Activated T-helper 1 cell treated with anti-CD3 and anti-CD28 coated beads, Interleukin-12 subunit alpha, Interleukin-12 subunit beta, Interleukin-2, Interleukin-4 antibody, amounts not matched to agents 30 ng/mL and 10 ng/mL and 1 ng/mL, durations not matched to agents 14 hours and 24 hours and 36 hours (primary cell): ENCODE measurements at regions of chr13 and their contacts with region 1.

Region 1: GRCh38 chr13:45417790-45418534 is at the start of gene SLC25A30:
- DNase-seq: peak; percentile 85
- H3K4me3 Mint-ChIP-seq: peak within 1 kb of the TSS; percentile 94
- H3K27ac Mint-ChIP-seq: peak within 1 kb of the TSS; percentile 92
- H3K4me1 Mint-ChIP-seq: peaks cover 18% of the 10 kb centered on the region
- H3K27me3 Mint-ChIP-seq: no peaks in the 10 kb centered on the region
- total RNA-seq, gene SLC25A30: 16.0 and 16.3 TPM in 2 replicates

Region 2: DNA sequence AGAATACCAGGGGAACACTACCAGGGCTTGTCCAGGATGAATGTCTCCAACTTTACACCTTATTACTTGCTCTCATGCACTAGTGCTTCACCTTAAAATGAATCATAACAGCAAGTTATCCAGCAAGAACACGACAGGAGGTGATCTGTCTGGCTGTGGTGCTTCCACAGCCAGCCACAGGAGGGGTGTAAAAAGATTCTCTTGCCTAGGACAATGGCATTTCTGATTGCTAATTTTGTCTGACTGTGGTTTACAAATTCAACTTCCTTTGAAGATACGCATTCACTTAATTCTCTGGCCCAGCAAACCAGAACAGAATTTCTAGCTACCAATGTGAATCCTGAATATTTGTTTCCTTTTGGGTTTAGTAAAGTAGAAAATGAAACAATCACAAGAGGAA is 23.7 kb after region 1 on chr13:
- intact Hi-C with region 1: loop called (anchors 1 kb)
- DNase-seq: no peak
- H3K4me3 Mint-ChIP-seq: no peak overlapping the region
- H3K27ac Mint-ChIP-seq: peak overlapping the region; percentile 35
- H3K4me1 Mint-ChIP-seq: peaks cover 9% of the 10 kb centered on the region
- H3K27me3 Mint-ChIP-seq: peaks cover 7% of the 10 kb centered on the region

Region 3: GRCh38 chr13:45961468-45961867 is 543.5 kb after region 1 on chr13:
- intact Hi-C with region 1: no loop called
- DNase-seq: no peak
- H3K4me3 Mint-ChIP-seq: no peak overlapping the region
- H3K27ac Mint-ChIP-seq: no peak overlapping the region
- H3K4me1 Mint-ChIP-seq: peaks cover 4% of the 10 kb centered on the region
- H3K27me3 Mint-ChIP-seq: no peaks in the 10 kb centered on the region